T-cell (primary cell): ENCODE measurements at regions of chr17 and their contacts with region 1.

Region 1: GRCh38 chr17:12107905-12108304 is 87.2 kb downstream of the MAP2K4 start:
- DNase-seq: no peak
- ATAC-seq: no peak
- H3K4me3 ChIP-seq: no peak overlapping the region
- H3K4me3 Mint-ChIP-seq: no peak overlapping the region
- H3K27ac ChIP-seq: no peak overlapping the region
- H3K27ac Mint-ChIP-seq: no peak overlapping the region
- H3K4me1 ChIP-seq: no peaks in the 10 kb centered on the region
- H3K4me1 Mint-ChIP-seq: peaks cover 3 to 15% (median 13%) of the 10 kb centered on the region in 3 donors
- H3K27me3 ChIP-seq: no peaks in the 10 kb centered on the region
- H3K27me3 Mint-ChIP-seq: no peaks in the 10 kb centered on the region

Region 2: GRCh38 chr17:13114601-13115031 is 1006.7 kb after region 1 on chr17:
- CTCF ChIA-PET with region 1: no interaction called
- POLR2A ChIA-PET with region 1: interaction called in 1 of 2 experiments, 18 read pairs
- DNase-seq: peak in 2 of 35 experiments; percentile 1 to 3
- ATAC-seq: no peak
- H3K4me3 ChIP-seq: no peak overlapping the region
- H3K4me3 Mint-ChIP-seq: no peak overlapping the region
- H3K27ac ChIP-seq: no peak overlapping the region
- H3K27ac Mint-ChIP-seq: no peak overlapping the region
- H3K4me1 ChIP-seq: no peaks in the 10 kb centered on the region
- H3K4me1 Mint-ChIP-seq: peaks cover 0 to 9% (median 3%) of the 10 kb centered on the region in 3 donors
- H3K27me3 ChIP-seq: peaks cover 0 to 9% of the 10 kb centered on the region in 2 experiments
- H3K27me3 Mint-ChIP-seq: peaks cover 10 to 13% of the 10 kb centered on the region in 2 donors